Naive thymus-derived CD4-positive, alpha-beta T cell (primary cell): ENCODE measurements at regions of chr11 and their contacts with region 1.

Region 1: DNA sequence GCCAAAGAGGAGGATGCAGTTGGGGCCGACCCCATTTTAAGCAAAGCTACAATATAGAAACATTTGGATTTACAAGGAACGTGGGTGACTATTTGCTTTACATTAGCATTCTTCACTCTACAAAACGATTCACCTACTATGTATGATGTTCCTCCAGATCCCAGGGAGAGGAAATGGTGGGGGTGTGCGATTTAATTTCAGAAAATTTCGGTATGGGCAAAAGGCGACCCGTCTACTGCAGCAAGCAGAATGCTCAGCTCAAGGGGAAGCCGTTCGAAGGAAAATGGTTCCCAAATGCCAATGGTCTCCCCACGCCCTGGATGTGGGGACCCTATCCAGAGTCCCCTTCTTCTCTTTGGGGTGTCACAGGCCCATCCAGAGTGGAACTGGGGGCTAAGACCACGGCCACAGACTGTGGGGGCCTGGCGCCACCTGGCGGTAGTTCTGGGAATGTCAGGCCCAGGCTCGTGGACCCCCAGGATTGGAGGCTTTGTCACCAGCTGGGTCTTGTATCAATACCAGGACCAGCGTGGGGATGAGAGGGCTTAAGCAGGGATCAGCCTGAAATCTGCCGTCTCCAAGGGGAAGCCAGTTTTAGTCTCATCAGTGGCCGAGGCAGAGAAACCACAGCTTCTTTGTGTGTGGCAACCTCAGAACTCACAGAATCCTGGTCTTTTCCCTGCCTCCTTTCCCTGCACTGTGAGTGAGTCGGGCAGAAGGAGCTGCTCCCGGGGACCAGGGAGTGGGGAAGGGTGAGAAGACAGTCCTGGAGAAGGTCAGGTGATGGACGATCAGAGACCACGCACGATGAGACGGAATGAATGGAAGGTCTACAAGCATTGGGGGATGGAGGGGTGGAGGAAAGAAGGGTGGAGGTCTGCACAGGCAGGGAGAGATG is 8.4 kb downstream of the LRRC10B start:
- DNase-seq: peak in 8 of 9 donors; percentile 31 to 68 (median 46)
- ATAC-seq: peak; percentile 78
- H3K4me3 ChIP-seq: peak overlapping the region; percentile 38
- H3K4me3 Mint-ChIP-seq: peak overlapping the region; percentile 32 to 76 (median 64)
- H3K27ac ChIP-seq: no peak overlapping the region
- H3K27ac Mint-ChIP-seq: peak overlapping the region in 2 of 9 donors; percentile 42
- H3K4me1 ChIP-seq: peaks cover 9 to 11% of the 10 kb centered on the region in 2 donors
- H3K4me1 Mint-ChIP-seq: peaks cover 8 to 15% (median 9%) of the 10 kb centered on the region in 7 donors
- H3K27me3 ChIP-seq: no peaks in the 10 kb centered on the region
- H3K27me3 Mint-ChIP-seq: peaks cover 13 to 40% (median 29%) of the 10 kb centered on the region in 5 donors

Region 2: GRCh38 chr11:61198361-61198760 is 318.6 kb before region 1 on chr11:
- CTCF ChIA-PET with region 1: no interaction called
- POLR2A ChIA-PET with region 1: no interaction called
- intact Hi-C with region 1: no loop called
- DNase-seq: no peak
- ATAC-seq: no peak
- H3K4me3 ChIP-seq: no peak overlapping the region
- H3K4me3 Mint-ChIP-seq: no peak overlapping the region
- H3K27ac ChIP-seq: no peak overlapping the region
- H3K27ac Mint-ChIP-seq: no peak overlapping the region
- H3K4me1 ChIP-seq: no peaks in the 10 kb centered on the region
- H3K4me1 Mint-ChIP-seq: peaks cover 0 to 4% (median 0%) of the 10 kb centered on the region in 7 donors
- H3K27me3 ChIP-seq: no peaks in the 10 kb centered on the region
- H3K27me3 Mint-ChIP-seq: peaks cover 0 to 22% (median 14%) of the 10 kb centered on the region in 5 donors

Region 3: DNA sequence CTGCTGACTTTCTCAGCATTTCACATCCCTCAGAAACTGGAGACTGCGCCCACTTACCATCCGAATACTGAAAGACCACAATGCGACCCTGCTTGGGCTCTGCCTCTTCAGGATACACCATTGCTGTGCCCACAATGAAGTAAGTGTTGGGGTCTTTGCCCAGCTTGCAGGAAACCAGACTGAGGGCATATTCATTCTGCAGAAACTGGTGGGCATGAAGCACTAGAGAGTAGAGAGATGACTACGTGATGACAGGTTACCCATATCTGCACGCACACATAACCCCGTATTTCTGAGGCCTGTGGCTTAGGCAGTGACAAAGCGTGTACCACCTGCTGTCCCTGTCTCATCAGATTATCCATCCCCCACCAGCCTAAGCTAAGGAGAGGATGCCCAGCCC is 207.2 kb before region 1 on chr11:
- CTCF ChIA-PET with region 1: no interaction called
- POLR2A ChIA-PET with region 1: no interaction called
- intact Hi-C with region 1: no loop called
- DNase-seq: no peak
- ATAC-seq: no peak
- H3K4me3 ChIP-seq: no peak overlapping the region
- H3K4me3 Mint-ChIP-seq: no peak overlapping the region
- H3K27ac ChIP-seq: no peak overlapping the region
- H3K27ac Mint-ChIP-seq: no peak overlapping the region
- H3K4me1 ChIP-seq: no peaks in the 10 kb centered on the region
- H3K4me1 Mint-ChIP-seq: peaks cover 0 to 2% (median 0%) of the 10 kb centered on the region in 7 donors
- H3K27me3 ChIP-seq: no peaks in the 10 kb centered on the region
- H3K27me3 Mint-ChIP-seq: no peaks in the 10 kb centered on the region

Region 4: DNA sequence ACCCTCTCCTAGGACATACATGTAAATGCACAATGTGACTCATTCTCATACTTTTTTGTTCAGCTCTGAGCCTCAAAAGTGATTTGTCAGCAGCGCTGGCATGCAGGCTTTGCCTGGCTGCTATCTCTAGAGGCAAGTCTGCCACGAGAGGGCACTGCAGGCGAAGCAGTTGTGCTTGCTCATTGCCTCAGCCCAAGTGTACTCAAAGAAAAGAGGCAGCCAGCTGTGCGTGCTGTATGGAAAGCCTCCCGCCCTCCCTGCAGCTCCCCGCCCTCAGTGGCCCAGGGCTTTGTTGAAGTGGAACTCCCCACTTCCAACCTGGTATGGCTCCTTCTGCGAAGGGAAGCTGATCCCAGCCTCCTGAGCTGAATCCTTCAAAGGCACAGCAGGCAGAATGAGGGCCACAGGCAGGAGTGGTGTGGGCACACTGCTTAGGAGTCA is 70.7 kb before region 1 on chr11:
- CTCF ChIA-PET with region 1: interaction called, 9 read pairs
- POLR2A ChIA-PET with region 1: no interaction called
- intact Hi-C with region 1: loop called (anchors 1 kb)
- DNase-seq: peak; percentile 24 to 71 (median 53)
- ATAC-seq: peak; percentile 92
- H3K4me3 ChIP-seq: no peak overlapping the region
- H3K4me3 Mint-ChIP-seq: no peak overlapping the region
- H3K27ac ChIP-seq: no peak overlapping the region
- H3K27ac Mint-ChIP-seq: peak overlapping the region in 4 of 9 donors; percentile 21 to 38 (median 30)
- H3K4me1 ChIP-seq: no peaks in the 10 kb centered on the region
- H3K4me1 Mint-ChIP-seq: peaks cover 7 to 27% (median 17%) of the 10 kb centered on the region in 7 donors
- H3K27me3 ChIP-seq: no peaks in the 10 kb centered on the region
- H3K27me3 Mint-ChIP-seq: no peaks in the 10 kb centered on the region

Region 5: GRCh38 chr11:61477727-61478148 is 39.2 kb before region 1 on chr11:
- CTCF ChIA-PET with region 1: interaction called, 37 read pairs
- POLR2A ChIA-PET with region 1: no interaction called
- intact Hi-C with region 1: loop called (anchors 1 kb)
- DNase-seq: peak in 8 of 9 donors; percentile 16 to 66 (median 44)
- ATAC-seq: peak; percentile 60
- H3K4me3 ChIP-seq: no peak overlapping the region
- H3K4me3 Mint-ChIP-seq: peak overlapping the region in 1 of 10 donors; percentile 1
- H3K27ac ChIP-seq: no peak overlapping the region
- H3K27ac Mint-ChIP-seq: no peak overlapping the region
- H3K4me1 ChIP-seq: peaks cover 5 to 6% of the 10 kb centered on the region in 2 donors
- H3K4me1 Mint-ChIP-seq: peaks cover 3 to 17% (median 8%) of the 10 kb centered on the region in 7 donors
- H3K27me3 ChIP-seq: no peaks in the 10 kb centered on the region
- H3K27me3 Mint-ChIP-seq: peaks cover 0 to 4% (median 0%) of the 10 kb centered on the region in 5 donors